MCF 10A (cell line): ENCODE measurements at regions of chr6 and their contacts with region 1.

Region 1: DNA sequence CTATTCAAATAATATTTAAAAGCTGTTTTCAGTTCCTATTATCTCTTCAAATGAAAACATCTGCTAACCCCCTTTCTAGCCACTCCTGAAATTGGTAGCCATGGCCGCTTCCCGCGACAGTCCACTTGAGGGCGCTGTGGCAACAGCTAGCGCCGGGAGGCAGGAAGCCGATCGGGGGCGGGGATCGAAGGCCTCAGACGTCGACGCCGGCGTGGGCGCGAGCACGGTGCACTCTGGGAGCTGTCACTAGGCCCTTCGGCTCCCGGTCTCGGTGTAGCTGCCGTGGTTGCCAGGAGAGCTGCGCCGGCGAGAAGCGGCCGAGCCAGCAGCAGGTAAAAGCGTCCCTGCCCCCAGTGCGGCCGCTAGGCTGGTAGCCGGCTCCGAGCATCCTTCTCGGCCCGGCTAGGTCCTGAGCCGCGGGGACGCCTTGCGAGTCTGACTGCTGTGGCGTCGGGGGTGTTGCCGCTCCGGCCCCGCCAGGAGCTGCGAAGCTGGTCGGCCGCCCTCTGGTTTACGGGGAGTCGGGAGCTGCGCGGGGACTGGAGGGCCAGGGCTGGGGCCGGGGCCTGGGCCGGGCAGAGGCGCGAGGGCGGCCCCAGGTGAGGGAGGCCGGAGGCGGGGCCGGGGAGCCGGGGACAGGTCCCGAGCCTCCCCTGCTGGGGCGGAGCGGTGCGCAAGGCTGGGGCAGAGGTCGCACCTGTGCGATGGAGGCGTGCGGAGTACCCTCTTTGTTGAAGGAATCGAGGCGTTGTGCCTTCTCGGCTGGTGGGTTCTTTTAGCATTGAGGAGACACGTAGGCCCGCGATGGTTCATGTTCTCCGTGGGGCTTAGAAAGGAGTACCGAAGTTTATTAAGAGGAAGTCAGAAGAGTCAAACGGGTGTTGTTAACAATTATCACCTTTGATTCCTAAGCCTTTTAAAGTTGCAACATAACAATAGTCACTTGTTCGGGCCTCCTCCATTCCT is at the start of gene DOP1A:
- DNase-seq: peak; percentile 95
- H3K4me3 Mint-ChIP-seq: peak within 1 kb of the TSS; percentile 85
- H3K27ac Mint-ChIP-seq: peak within 1 kb of the TSS; percentile 17
- H3K4me1 Mint-ChIP-seq: peaks cover 22% of the 10 kb centered on the region
- H3K27me3 Mint-ChIP-seq: no peaks in the 10 kb centered on the region
- CTCF ChIP-seq: peak; percentile 94
- total RNA-seq, gene DOP1A: 25.8 and 31.3 TPM in 2 replicates

Region 2: GRCh38 chr6:82257088-82257772 is 810.5 kb before region 1 on chr6:
- CTCF ChIA-PET with region 1: interaction called, 55 read pairs
- POLR2A ChIA-PET with region 1: interaction called, 4 read pairs
- intact Hi-C with region 1: no loop called
- DNase-seq: no peak
- H3K4me3 Mint-ChIP-seq: no peak overlapping the region
- H3K27ac Mint-ChIP-seq: no peak overlapping the region
- H3K4me1 Mint-ChIP-seq: no peaks in the 10 kb centered on the region
- H3K27me3 Mint-ChIP-seq: no peaks in the 10 kb centered on the region
- CTCF ChIP-seq: no peak

Region 3: GRCh38 chr6:82363351-82364086 is 704.2 kb before region 1 on chr6 and contains the start of gene TPBG:
- CTCF ChIA-PET with region 1: interaction called, 4 read pairs
- POLR2A ChIA-PET with region 1: interaction called, 19 read pairs
- intact Hi-C with region 1: no loop called
- DNase-seq: peak; percentile 85
- H3K4me3 Mint-ChIP-seq: peak within 1 kb of the TSS; percentile 87
- H3K27ac Mint-ChIP-seq: peak within 1 kb of the TSS; percentile 94
- H3K4me1 Mint-ChIP-seq: peaks cover 32% of the 10 kb centered on the region
- H3K27me3 Mint-ChIP-seq: no peaks in the 10 kb centered on the region
- CTCF ChIP-seq: peak; percentile 23
- total RNA-seq, gene TPBG: 72.9 and 96.9 TPM in 2 replicates

Region 4: DNA sequence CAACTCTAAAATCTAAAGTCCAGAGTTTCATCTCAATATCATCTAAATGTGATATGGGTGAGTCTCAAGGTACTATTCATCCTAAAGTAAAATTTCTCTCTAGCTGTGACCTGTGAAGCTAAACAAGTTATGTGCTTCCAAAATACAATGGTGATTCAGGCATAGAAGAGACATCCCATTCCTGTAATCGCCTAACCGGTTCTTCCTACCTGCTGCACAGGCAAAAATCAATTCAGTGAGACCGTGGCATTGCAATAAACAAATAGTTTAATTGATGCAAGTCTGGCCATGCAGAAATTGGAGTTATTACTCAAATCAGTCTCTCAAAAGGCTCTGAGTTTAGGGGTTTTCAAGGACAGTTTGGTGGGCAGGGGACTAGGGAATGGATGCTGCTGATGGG is 234.9 kb before region 1 on chr6:
- CTCF ChIA-PET with region 1: no interaction called
- POLR2A ChIA-PET with region 1: no interaction called
- intact Hi-C with region 1: no loop called
- DNase-seq: no peak
- H3K4me3 Mint-ChIP-seq: no peak overlapping the region
- H3K27ac Mint-ChIP-seq: no peak overlapping the region
- H3K4me1 Mint-ChIP-seq: no peaks in the 10 kb centered on the region
- H3K27me3 Mint-ChIP-seq: no peaks in the 10 kb centered on the region
- CTCF ChIP-seq: no peak

Region 5: GRCh38 chr6:83108378-83108777 is 40.6 kb after region 1 on chr6:
- CTCF ChIA-PET with region 1: interaction called, 24 read pairs
- POLR2A ChIA-PET with region 1: interaction called, 4 read pairs
- intact Hi-C with region 1: no loop called
- DNase-seq: no peak
- H3K4me3 Mint-ChIP-seq: no peak overlapping the region
- H3K27ac Mint-ChIP-seq: no peak overlapping the region
- H3K4me1 Mint-ChIP-seq: no peaks in the 10 kb centered on the region
- H3K27me3 Mint-ChIP-seq: no peaks in the 10 kb centered on the region
- CTCF ChIP-seq: no peak

Region 6: GRCh38 chr6:83138118-83138722 is 70.5 kb after region 1 on chr6:
- CTCF ChIA-PET with region 1: interaction called, 23 read pairs
- POLR2A ChIA-PET with region 1: interaction called, 6 read pairs
- intact Hi-C with region 1: no loop called
- DNase-seq: no peak
- H3K4me3 Mint-ChIP-seq: no peak overlapping the region
- H3K27ac Mint-ChIP-seq: no peak overlapping the region
- H3K4me1 Mint-ChIP-seq: no peaks in the 10 kb centered on the region
- H3K27me3 Mint-ChIP-seq: no peaks in the 10 kb centered on the region
- CTCF ChIP-seq: no peak

Region 7: GRCh38 chr6:83192871-83193746 is 125.4 kb after region 1 on chr6 and contains the starts of genes PGM3 and RWDD2A:
- CTCF ChIA-PET with region 1: interaction called, 88 read pairs
- POLR2A ChIA-PET with region 1: interaction called, 27 read pairs
- intact Hi-C with region 1: no loop called
- DNase-seq: peak; percentile 88
- H3K4me3 Mint-ChIP-seq: peak within 1 kb of the TSS; percentile 88
- H3K27ac Mint-ChIP-seq: peak within 1 kb of the TSS; percentile 90
- H3K4me1 Mint-ChIP-seq: no peaks in the 10 kb centered on the region
- H3K27me3 Mint-ChIP-seq: no peaks in the 10 kb centered on the region
- CTCF ChIP-seq: no peak
- total RNA-seq, gene PGM3: 117 and 150 TPM in 2 replicates
- total RNA-seq, gene RWDD2A: 6.5 and 7.5 TPM in 2 replicates

Region 8: DNA sequence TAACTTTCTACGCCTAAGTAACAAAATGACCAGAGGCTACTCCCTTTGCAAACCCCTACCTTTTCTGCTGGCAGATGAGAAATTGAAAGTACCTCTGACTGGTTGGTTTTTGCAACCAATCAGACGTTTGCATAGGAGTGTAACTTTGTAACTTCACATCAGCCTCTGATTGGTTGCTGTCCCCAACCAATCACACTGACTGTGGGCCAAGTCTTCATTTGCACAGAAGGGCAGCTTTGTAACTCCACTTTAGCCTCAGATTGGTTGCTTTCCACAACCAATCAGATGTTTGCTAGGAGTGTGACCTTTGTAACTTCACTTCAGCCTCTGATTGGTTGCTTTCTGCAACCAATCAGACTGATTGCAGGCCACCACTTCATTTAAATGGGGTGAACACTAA is 274.0 kb after region 1 on chr6:
- CTCF ChIA-PET with region 1: no interaction called
- POLR2A ChIA-PET with region 1: no interaction called
- intact Hi-C with region 1: no loop called
- DNase-seq: no peak
- H3K4me3 Mint-ChIP-seq: no peak overlapping the region
- H3K27ac Mint-ChIP-seq: no peak overlapping the region
- H3K4me1 Mint-ChIP-seq: no peaks in the 10 kb centered on the region
- H3K27me3 Mint-ChIP-seq: no peaks in the 10 kb centered on the region
- CTCF ChIP-seq: no peak

Region 9: DNA sequence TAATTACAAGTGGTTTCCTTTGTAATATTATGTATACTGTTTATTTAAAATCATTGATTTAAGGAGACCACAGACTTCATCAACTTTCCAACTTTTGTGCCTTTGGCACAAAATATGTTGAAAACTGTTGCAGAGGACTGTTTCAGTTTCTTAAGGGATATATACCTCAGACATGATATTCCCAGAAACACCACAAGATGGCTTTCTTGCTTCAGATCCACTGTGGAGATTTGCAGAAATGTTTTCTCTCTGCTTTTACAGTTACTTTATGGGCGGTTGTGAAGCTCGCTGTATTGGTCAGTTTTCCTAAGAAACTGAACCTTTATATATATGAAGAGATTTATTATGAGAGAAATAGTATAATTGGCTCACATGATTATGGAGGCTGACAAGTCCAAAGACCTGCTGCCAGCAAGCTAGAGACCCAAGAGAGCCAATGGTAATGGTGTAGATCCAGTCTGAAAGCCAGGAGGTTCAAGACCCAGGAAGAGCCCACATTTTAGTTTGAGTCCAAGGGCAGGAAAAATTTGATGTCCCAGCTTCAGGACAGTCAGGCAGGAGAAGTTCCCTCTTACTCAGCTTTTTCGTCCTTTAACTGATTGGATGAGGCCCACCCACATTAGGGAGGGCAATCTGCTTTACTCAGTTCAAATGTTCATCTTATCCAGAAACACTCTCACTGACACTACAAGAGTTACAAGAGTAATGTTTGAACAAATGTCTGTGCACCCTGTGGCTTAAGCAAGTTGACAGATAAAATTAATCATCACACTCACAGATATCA is 350.3 kb after region 1 on chr6:
- CTCF ChIA-PET with region 1: interaction called, 14 read pairs
- POLR2A ChIA-PET with region 1: interaction called, 4 read pairs
- intact Hi-C with region 1: loop called (anchors 5 kb)
- DNase-seq: peak; percentile 60
- H3K4me3 Mint-ChIP-seq: no peak overlapping the region
- H3K27ac Mint-ChIP-seq: no peak overlapping the region
- H3K4me1 Mint-ChIP-seq: no peaks in the 10 kb centered on the region
- H3K27me3 Mint-ChIP-seq: no peaks in the 10 kb centered on the region
- CTCF ChIP-seq: peak; percentile 60